ENCODE measurements at regions of chr12 and their contacts with region 1.

Region 1: GRCh38 chr12:68844788-68845695 is 37.1 kb downstream of the MDM2 start:
- DNase-seq: no peak
- H3K4me3 Mint-ChIP-seq: no peak overlapping the region
- H3K27ac Mint-ChIP-seq: no peak overlapping the region
- H3K4me1 Mint-ChIP-seq: peaks cover 7% of the 10 kb centered on the region
- H3K27me3 Mint-ChIP-seq: no peaks in the 10 kb centered on the region

Region 2: GRCh38 chr12:68831272-68831671 is 13.8 kb before region 1 on chr12:
- CTCF ChIA-PET with region 1: interaction called, 21 read pairs
- intact Hi-C with region 1: no loop called
- DNase-seq: no peak
- H3K4me3 Mint-ChIP-seq: no peak overlapping the region
- H3K27ac Mint-ChIP-seq: no peak overlapping the region
- H3K4me1 Mint-ChIP-seq: peaks cover 25% of the 10 kb centered on the region
- H3K27me3 Mint-ChIP-seq: no peaks in the 10 kb centered on the region